WTC11 (cell line): ENCODE measurements at regions of chr11 and their contacts with region 1.

Region 1: GRCh38 chr11:119095066-119095880 is 6.4 kb downstream of the DPAGT1 start:
- DNase-seq: peak; percentile 99
- ATAC-seq: peak; percentile 90
- H3K4me3 Mint-ChIP-seq: peak overlapping the region; percentile 94
- H3K27ac Mint-ChIP-seq: peak overlapping the region; percentile 84
- H3K4me1 Mint-ChIP-seq: peaks cover 29% of the 10 kb centered on the region
- H3K27me3 Mint-ChIP-seq: no peaks in the 10 kb centered on the region
- CTCF ChIP-seq: no peak

Region 2: DNA sequence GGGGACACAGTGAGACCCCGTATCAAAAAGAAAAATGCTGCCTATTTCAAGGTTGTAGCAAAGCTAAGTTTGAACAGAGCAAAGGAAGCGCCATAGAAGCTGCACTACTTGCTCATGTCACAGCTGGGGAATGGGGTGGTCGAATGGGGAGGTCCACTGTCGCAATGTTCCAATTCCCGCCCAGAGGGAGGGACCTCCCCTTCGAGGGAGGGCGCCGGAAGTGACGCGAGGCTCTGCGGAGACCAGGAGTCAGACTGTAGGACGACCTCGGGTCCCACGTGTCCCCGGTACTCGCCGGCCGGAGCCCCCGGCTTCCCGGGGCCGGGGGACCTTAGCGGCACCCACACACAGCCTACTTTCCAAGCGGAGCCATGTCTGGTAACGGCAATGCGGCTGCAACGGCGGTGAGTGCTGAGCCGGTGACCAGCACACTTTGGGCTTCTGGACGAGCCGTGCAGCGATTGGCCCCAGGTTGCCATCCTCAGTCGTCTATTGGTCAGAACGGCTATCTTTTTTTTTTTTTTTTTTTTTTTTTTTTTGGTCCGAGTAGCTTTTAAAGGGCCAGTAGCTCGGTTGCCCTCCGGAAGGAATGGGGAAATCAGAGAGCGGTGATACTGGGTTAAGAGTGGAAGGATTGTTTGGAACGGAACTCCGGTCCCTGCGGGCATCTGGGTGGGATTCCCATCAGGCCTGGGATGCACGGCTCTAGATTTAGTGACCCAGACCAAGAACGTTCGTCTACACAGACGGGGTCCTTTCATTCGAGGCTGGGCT is 10.4 kb before region 1 on chr11 and contains the start of gene HMBS:
- CTCF ChIA-PET with region 1: interaction called, 3 read pairs
- POLR2A ChIA-PET with region 1: interaction called, 10 read pairs
- DNase-seq: peak; percentile 87
- ATAC-seq: peak; percentile 89
- H3K4me3 Mint-ChIP-seq: peak within 1 kb of the TSS; percentile 98
- H3K27ac Mint-ChIP-seq: peak within 1 kb of the TSS; percentile 98
- H3K4me1 Mint-ChIP-seq: peaks cover 3% of the 10 kb centered on the region; the same call in 1 of the 2 replicates
- H3K27me3 Mint-ChIP-seq: no peaks in the 10 kb centered on the region
- CTCF ChIP-seq: no peak
- total RNA-seq, gene HMBS: 55.4 to 64.4 TPM (median 62.3 TPM) in 3 replicates